HEK293 (cell line): ENCODE measurements at regions of chr19 and their contacts with region 1.

Region 1: DNA sequence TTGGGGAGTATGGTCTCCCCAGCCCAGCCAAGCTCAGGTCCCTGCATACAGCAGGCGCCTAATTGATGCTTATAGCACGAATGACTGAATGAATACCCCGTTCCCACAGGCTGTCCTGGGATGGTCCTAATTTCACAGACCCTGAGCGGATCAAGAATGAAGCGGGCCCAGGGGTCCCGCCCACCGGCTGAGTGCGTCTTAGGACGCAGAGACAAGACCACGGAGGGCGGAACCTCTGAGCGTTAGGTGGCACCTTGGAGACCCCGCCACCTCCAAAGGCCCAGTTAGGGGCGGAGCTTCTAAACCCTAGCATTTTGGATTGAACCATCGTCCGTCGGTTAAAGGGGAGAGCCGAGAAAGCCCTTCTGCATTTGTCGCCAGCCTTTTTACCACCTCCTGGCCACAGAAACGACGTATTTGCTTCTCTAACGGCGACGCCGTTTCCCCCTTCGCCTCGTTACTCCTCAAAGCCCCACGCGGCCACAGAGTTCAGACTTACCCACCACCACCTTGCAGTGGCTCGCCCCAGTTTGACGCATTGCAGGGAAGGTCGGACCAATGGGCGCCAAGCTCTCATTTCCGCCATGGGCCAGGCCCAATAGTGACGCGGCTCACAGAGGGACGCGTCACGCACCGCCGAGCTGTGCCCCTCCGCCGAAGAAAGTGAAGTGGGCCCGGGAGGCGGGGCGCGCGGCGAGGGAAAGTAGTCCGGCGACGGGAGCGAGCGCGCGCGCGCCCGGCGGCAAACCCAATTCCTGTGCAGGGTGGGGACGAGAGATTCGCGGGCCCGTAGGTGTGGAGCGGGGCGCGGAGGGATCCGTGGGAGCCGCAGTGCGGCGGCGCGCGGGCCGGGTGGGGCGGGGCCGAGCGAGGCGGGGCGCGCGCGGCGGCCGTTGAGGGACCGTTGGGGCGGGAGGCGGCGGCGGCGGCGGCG is 479 bp upstream of the CALM3 start:
- H3K4me3 ChIP-seq: peak overlapping the region; percentile 94
- H3K27ac ChIP-seq: peak overlapping the region; percentile 99
- H3K4me1 ChIP-seq: peaks cover 8% of the 10 kb centered on the region
- CTCF ChIP-seq: no peak

Region 2: DNA sequence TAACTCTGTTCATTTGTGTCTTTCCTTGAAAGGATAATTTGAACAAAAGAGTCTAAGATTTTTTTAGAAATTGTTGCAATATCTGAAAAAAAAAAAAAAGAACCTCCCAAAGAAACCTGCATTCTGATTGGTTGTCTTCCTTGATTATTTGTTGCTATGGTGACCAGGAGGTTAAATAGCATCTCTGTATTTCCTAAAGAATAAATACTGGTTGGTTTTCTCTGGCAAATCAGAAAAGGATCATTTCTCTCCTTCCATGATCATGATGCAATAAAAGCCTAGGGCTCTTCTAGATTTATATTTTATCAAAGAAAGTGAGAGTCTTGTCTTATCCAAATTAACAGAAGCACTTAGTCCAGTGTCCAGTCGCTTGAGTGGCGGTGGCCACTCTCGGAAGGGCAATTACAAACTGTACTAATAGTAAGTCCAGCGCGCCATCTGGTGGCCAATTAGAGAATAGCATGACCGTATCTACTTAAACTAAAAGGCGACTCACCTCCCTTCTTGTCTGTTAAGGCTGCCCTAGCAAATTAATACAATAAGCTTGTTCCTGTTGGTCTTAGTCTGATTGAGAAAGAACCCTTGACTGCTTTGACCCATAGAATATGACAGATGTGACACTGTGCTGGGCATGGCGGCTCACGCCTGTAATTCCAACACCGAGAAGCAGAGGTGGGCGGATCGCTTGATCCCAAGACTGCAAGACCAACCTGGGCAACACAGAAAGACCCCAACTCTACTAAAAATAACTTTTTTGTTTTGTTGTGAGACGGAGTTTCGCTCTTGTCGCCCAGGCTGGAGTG is 58.0 kb before region 1 on chr19:
- CTCF ChIA-PET with region 1: interaction called, 14 read pairs
- POLR2A ChIA-PET with region 1: interaction called, 6 read pairs
- H3K4me3 ChIP-seq: no peak overlapping the region
- H3K27ac ChIP-seq: no peak overlapping the region
- H3K4me1 ChIP-seq: no peaks in the 10 kb centered on the region; the same call in 1 of the 2 replicates
- CTCF ChIP-seq: peak; percentile 75

Region 3: GRCh38 chr19:46587861-46588260 is 12.8 kb before region 1 on chr19:
- CTCF ChIA-PET with region 1: interaction called, 5 read pairs
- POLR2A ChIA-PET with region 1: interaction called, 13 read pairs
- H3K4me3 ChIP-seq: no peak overlapping the region
- H3K27ac ChIP-seq: no peak overlapping the region
- H3K4me1 ChIP-seq: no peaks in the 10 kb centered on the region
- CTCF ChIP-seq: no peak